Activated CD8-positive, alpha-beta memory T cell treated with anti-CD3 and anti-CD28 coated beads, Interleukin-2, amount 10 ng/mL, durations not matched to agents 7 days and 5 days (primary cell): ENCODE measurements at regions of chr10 and their contacts with region 1.

Region 1: GRCh38 chr10:58384999-58385783 is at the start of gene TFAM:
- DNase-seq: peak; percentile 96
- ATAC-seq: peak; percentile 91
- H3K4me3 Mint-ChIP-seq: peak within 1 kb of the TSS; percentile 85
- H3K27ac Mint-ChIP-seq: peak within 1 kb of the TSS; percentile 86
- H3K4me1 Mint-ChIP-seq: peaks cover 28% of the 10 kb centered on the region
- H3K27me3 Mint-ChIP-seq: no peaks in the 10 kb centered on the region
- total RNA-seq, gene TFAM: 52.8 to 80.8 TPM

Region 2: GRCh38 chr10:58268870-58269605 is 116.2 kb before region 1 on chr10 and contains the start of gene CISD1:
- CTCF ChIA-PET with region 1: interaction called, 12 read pairs
- DNase-seq: peak; percentile 96
- ATAC-seq: peak; percentile 79
- H3K4me3 Mint-ChIP-seq: peak within 1 kb of the TSS; percentile 91
- H3K27ac Mint-ChIP-seq: peak within 1 kb of the TSS; percentile 92
- H3K4me1 Mint-ChIP-seq: peaks cover 28% of the 10 kb centered on the region
- H3K27me3 Mint-ChIP-seq: no peaks in the 10 kb centered on the region
- total RNA-seq, gene CISD1: 32.2 to 39.4 TPM

Region 3: GRCh38 chr10:58299580-58299979 is 85.6 kb before region 1 on chr10:
- CTCF ChIA-PET with region 1: interaction called, 13 read pairs
- DNase-seq: peak; percentile 61
- ATAC-seq: peak; percentile 80
- H3K4me3 Mint-ChIP-seq: no peak overlapping the region
- H3K27ac Mint-ChIP-seq: no peak overlapping the region
- H3K4me1 Mint-ChIP-seq: no peaks in the 10 kb centered on the region
- H3K27me3 Mint-ChIP-seq: peaks cover 21% of the 10 kb centered on the region